B cell (primary cell): ENCODE measurements at regions of chr10 and their contacts with region 1.

Region 1: DNA sequence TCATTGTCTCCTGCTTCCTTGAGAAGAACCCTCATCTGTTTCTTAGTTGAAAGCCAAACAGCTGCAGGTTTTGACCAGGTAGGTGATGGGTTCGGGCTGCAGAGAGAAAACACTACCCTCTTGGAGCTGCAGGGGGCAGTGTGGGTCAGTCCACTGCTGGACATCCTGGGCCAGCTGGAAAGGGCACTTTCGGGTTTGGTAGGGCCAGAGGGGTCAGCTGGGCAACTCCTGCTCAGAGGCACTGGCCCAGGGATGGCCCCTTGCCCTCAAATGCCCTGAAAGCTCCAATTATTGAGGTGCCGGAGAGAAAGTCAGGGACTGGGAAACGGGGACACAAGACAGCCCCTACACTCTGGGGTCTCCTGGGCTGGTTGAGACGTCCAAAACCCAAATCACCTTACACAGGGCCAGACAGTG is 90.7 kb downstream of the MKI67 start:
- DNase-seq: peak; percentile 64
- ATAC-seq: peak; percentile 83
- H3K4me3 ChIP-seq: no peak overlapping the region
- H3K4me3 Mint-ChIP-seq: no peak overlapping the region
- H3K27ac ChIP-seq: no peak overlapping the region
- H3K27ac Mint-ChIP-seq: peak overlapping the region; percentile 41
- H3K4me1 ChIP-seq: no peaks in the 10 kb centered on the region
- H3K4me1 Mint-ChIP-seq: no peaks in the 10 kb centered on the region
- H3K27me3 ChIP-seq: no peaks in the 10 kb centered on the region
- H3K27me3 Mint-ChIP-seq: no peaks in the 10 kb centered on the region
- CTCF ChIP-seq: peak; percentile 80

Region 2: DNA sequence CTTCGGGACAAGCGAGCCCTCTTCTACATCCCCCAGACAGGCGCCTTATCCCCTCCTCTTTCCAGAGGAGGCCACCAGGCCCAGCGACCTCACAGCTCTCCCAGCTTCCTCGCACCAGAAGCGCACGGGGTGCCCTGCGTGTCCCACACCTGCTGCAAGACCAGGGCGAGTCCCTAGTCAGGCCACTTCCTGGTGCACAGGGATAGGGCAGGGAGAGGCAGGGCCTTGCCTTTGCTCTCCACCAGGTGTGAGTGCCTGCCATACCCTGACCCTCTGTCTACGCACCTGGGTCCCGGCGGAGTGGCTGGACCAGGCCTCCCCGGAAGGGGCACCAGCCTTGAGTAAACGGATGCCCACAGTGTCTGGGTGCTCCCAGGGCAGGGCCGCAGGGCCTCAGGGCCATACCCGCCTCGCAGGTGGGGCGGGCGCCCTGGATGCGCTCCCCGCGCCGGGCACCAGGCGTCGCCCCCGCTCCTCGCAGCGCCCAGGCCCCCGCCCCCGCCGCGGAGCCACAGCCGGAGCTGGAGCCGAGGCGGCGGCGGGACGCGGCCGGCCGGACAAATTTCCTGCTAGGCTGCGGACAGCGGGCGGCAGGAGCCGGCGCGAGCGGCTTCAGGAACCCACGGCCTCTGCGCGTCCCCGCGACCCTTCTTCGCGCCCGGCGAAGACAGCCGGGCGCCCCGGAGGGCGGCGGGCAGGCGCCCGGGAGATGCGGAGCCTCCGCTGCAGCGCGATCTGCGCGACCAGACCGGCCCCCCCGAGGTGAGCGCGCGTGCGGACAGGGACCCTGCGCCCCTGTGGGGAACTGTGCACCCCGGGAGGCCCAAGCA is 128.8 kb before region 1 on chr10 and contains the start of gene PTPRE:
- CTCF ChIA-PET with region 1: interaction called, 11 read pairs
- POLR2A ChIA-PET with region 1: no interaction called
- intact Hi-C with region 1: no loop called
- DNase-seq: peak; percentile 78
- ATAC-seq: peak; percentile 95
- H3K4me3 ChIP-seq: peak within 1 kb of the TSS in 3 of 5 experiments; percentile 42 to 62 (median 49)
- H3K4me3 Mint-ChIP-seq: peak within 1 kb of the TSS; percentile 49
- H3K27ac ChIP-seq: no peak within 1 kb of the TSS
- H3K27ac Mint-ChIP-seq: no peak within 1 kb of the TSS
- H3K4me1 ChIP-seq: peaks cover 8 to 9% of the 10 kb centered on the region in 2 donors
- H3K4me1 Mint-ChIP-seq: no peaks in the 10 kb centered on the region
- H3K27me3 ChIP-seq: peaks cover 0 to 30% (median 12%) of the 10 kb centered on the region in 4 experiments
- H3K27me3 Mint-ChIP-seq: peaks cover 57% of the 10 kb centered on the region
- CTCF ChIP-seq: peak; percentile 74
- total RNA-seq, gene PTPRE: 31.5 and 32.7 TPM in 2 replicates

Region 3: DNA sequence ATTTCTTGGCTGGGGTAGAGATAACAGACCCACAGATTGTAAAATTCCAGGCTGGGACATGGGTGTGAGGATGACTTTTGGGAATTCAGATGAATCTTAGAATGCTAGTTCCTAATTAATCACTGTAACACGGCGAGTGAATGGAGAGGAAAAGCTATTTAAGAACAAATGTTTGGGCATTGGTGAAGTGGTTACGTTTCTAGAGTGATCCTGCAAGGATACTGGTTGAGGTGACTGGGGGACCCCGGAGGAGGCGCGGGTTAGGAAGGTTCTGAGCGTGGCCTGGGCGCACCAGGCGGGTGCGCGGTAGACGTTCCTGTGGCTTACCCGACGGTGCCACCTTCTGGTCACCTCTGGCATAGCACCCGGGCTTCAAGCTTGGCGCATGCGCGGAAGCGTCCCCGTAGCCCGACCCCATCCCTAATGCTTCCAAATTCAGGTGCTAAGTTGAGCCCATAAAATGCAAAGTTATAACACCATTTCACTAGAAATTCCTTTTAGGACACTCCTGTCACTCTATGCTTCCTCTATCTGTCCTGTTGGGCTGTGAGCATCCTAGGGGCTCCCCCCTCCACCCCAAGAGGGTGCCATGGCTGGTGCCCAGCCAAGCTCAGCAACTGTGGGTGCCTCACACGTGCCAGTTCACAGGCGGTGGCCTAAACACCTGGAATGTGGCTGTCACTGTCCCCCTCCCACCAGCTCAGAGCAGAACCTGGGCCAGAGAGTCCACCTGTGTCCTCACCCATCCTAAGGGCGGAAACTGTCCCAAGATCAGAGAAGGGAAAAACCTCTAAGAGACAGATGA is 24.2 kb before region 1 on chr10:
- CTCF ChIA-PET with region 1: interaction called, 28 read pairs
- POLR2A ChIA-PET with region 1: no interaction called
- intact Hi-C with region 1: no loop called
- DNase-seq: peak; percentile 90
- ATAC-seq: peak; percentile 99
- H3K4me3 ChIP-seq: no peak overlapping the region
- H3K4me3 Mint-ChIP-seq: peak overlapping the region; percentile 58
- H3K27ac ChIP-seq: no peak overlapping the region
- H3K27ac Mint-ChIP-seq: peak overlapping the region; percentile 54
- H3K4me1 ChIP-seq: peaks cover 4 to 10% of the 10 kb centered on the region in 2 donors
- H3K4me1 Mint-ChIP-seq: peaks cover 10% of the 10 kb centered on the region
- H3K27me3 ChIP-seq: peaks cover 0 to 14% (median 0%) of the 10 kb centered on the region in 4 experiments
- H3K27me3 Mint-ChIP-seq: peaks cover 28% of the 10 kb centered on the region
- CTCF ChIP-seq: peak; percentile 97

Region 4: DNA sequence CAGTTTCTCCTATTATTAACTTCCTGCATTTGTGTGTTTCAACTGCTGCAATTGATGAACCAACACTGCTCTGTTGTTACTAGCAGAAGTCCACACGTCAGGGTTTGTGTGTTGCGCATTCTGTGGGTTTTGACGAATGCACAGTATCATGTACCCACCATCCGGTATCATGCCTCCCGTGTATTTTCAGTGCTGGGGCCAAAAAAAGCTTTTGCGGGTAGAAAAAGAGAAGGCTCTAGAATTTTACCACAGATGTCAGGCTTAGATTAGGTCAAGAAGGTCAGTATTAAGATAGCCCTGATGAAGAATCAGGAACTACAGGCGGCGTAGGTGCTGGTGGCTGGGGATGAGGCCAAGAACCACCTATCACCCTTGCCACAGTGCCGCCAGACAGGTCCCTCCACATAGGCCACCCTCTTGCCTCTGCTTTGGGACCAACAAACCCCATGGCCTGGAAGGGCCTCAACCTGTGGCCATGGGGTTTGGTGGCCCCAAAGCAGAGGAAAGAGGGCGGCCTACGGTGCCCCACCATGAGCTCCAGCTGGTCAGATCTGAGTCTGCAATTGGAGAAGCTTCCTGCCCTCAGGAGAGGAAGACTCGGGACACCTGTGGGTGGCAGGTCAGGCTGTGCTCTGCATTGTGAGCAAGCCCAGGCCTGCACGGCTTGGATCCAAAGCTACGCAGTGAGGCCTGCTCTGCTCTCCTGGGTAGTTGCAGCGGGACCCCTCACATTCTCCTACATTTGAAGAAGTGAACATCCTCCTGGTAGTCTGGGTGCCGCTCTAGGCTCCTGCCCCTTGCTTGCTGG is 18.8 kb after region 1 on chr10:
- CTCF ChIA-PET with region 1: interaction called, 524 read pairs
- POLR2A ChIA-PET with region 1: no interaction called
- intact Hi-C with region 1: no loop called
- DNase-seq: no peak
- ATAC-seq: no peak
- H3K4me3 ChIP-seq: no peak overlapping the region
- H3K4me3 Mint-ChIP-seq: no peak overlapping the region
- H3K27ac ChIP-seq: no peak overlapping the region
- H3K27ac Mint-ChIP-seq: no peak overlapping the region
- H3K4me1 ChIP-seq: peaks cover 7 to 27% of the 10 kb centered on the region in 2 donors
- H3K4me1 Mint-ChIP-seq: peaks cover 22% of the 10 kb centered on the region
- H3K27me3 ChIP-seq: no peaks in the 10 kb centered on the region
- H3K27me3 Mint-ChIP-seq: no peaks in the 10 kb centered on the region
- CTCF ChIP-seq: no peak

Region 5: GRCh38 chr10:128078136-128078969 is 42.8 kb after region 1 on chr10:
- CTCF ChIA-PET with region 1: interaction called, 524 read pairs
- POLR2A ChIA-PET with region 1: no interaction called
- intact Hi-C with region 1: no loop called
- DNase-seq: peak; percentile 50
- ATAC-seq: no peak
- H3K4me3 ChIP-seq: no peak overlapping the region
- H3K4me3 Mint-ChIP-seq: no peak overlapping the region
- H3K27ac ChIP-seq: no peak overlapping the region
- H3K27ac Mint-ChIP-seq: no peak overlapping the region
- H3K4me1 ChIP-seq: no peaks in the 10 kb centered on the region
- H3K4me1 Mint-ChIP-seq: no peaks in the 10 kb centered on the region
- H3K27me3 ChIP-seq: no peaks in the 10 kb centered on the region
- H3K27me3 Mint-ChIP-seq: no peaks in the 10 kb centered on the region
- CTCF ChIP-seq: peak; percentile 73

Region 6: GRCh38 chr10:128776673-128777252 is 741.2 kb after region 1 on chr10:
- CTCF ChIA-PET with region 1: no interaction called
- POLR2A ChIA-PET with region 1: no interaction called
- intact Hi-C with region 1: no loop called
- DNase-seq: no peak
- ATAC-seq: no peak
- H3K4me3 ChIP-seq: no peak overlapping the region
- H3K4me3 Mint-ChIP-seq: no peak overlapping the region
- H3K27ac ChIP-seq: no peak overlapping the region
- H3K27ac Mint-ChIP-seq: no peak overlapping the region
- H3K4me1 ChIP-seq: no peaks in the 10 kb centered on the region
- H3K4me1 Mint-ChIP-seq: no peaks in the 10 kb centered on the region
- H3K27me3 ChIP-seq: no peaks in the 10 kb centered on the region
- H3K27me3 Mint-ChIP-seq: no peaks in the 10 kb centered on the region
- CTCF ChIP-seq: no peak